Endothelial cell of umbilical vein (primary cell): ENCODE measurements at regions of chr9 and their contacts with region 1.

Region 1: DNA sequence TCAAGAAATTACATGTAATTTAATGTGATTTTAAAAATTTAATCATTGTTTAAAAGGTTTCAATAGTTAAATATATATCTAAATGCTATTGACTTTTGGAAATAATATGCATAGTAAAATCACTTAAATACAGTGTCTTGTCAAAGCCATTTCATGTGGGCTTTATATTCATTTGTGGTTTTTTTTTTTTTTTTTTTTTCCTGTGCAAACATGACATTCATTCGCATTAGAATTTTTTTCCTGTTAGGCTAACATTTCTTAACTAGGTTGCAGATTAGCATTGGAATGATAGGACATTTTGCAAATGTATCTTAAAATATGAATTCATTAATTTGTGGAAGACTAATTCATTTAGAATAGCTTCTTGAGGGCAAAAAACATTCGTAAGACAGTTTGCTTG is 149.8 kb downstream of the PBX3 start:
- DNase-seq: no peak
- H3K4me3 ChIP-seq: no peak overlapping the region
- H3K27ac ChIP-seq: no peak overlapping the region
- H3K4me1 ChIP-seq: peaks cover 1% of the 10 kb centered on the region
- H3K27me3 ChIP-seq: no peaks in the 10 kb centered on the region
- CTCF ChIP-seq: no peak
- POLR2A ChIP-seq: no peak

Region 2: DNA sequence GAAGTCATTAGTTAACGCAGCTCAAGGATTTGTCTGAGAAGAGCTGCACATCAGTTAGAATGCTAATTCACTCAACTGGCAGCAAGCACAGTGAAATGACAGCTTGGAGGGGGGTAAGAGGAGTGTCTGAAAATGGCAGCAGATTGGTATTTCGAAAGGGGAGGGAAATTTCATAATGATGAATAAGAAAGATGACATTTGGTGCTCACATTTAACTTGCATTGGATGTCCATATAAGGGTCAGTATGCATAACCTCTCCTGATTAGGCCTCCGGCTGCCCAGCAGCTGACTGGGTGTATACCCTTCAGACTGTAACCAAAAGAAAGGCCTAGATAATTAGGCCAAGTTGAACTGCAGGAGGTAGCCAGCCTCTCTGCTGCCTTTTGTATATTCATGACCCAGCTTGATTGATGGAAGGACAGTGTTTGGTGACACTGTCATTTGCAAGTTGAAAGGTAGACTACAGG is 18.8 kb before region 1 on chr9:
- CTCF ChIA-PET with region 1: no interaction called
- POLR2A ChIA-PET with region 1: interaction called, 11 read pairs
- dilution Hi-C with region 1: no loop called
- intact Hi-C with region 1: no loop called
- DNase-seq: no peak
- H3K4me3 ChIP-seq: no peak overlapping the region
- H3K27ac ChIP-seq: no peak overlapping the region
- H3K4me1 ChIP-seq: no peaks in the 10 kb centered on the region
- H3K27me3 ChIP-seq: no peaks in the 10 kb centered on the region
- CTCF ChIP-seq: no peak
- POLR2A ChIP-seq: no peak

Region 3: DNA sequence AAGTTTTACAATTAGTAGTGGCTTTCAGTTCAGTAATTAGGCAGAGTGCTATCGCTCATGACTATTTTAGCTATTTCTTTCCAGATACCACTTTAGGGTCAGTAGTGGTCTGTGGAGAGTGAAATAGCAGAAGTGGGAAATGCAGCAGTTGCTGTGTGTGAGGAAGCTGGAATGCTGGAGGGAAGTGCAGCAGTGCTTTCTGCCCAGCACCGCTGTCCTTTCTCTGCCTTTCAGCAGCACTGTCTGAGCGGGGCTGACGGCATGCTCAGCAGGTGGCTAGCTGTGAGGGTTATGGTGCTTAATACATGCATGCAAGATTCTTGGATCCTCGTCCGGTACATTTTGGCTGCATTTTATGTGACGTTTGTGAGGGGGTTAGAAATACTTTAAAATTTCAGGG is 64.1 kb after region 1 on chr9:
- CTCF ChIA-PET with region 1: no interaction called
- POLR2A ChIA-PET with region 1: no interaction called
- dilution Hi-C with region 1: no loop called
- intact Hi-C with region 1: no loop called
- DNase-seq: no peak
- H3K4me3 ChIP-seq: no peak overlapping the region
- H3K27ac ChIP-seq: no peak overlapping the region
- H3K4me1 ChIP-seq: no peaks in the 10 kb centered on the region
- H3K27me3 ChIP-seq: no peaks in the 10 kb centered on the region
- CTCF ChIP-seq: no peak
- POLR2A ChIP-seq: no peak

Region 4: DNA sequence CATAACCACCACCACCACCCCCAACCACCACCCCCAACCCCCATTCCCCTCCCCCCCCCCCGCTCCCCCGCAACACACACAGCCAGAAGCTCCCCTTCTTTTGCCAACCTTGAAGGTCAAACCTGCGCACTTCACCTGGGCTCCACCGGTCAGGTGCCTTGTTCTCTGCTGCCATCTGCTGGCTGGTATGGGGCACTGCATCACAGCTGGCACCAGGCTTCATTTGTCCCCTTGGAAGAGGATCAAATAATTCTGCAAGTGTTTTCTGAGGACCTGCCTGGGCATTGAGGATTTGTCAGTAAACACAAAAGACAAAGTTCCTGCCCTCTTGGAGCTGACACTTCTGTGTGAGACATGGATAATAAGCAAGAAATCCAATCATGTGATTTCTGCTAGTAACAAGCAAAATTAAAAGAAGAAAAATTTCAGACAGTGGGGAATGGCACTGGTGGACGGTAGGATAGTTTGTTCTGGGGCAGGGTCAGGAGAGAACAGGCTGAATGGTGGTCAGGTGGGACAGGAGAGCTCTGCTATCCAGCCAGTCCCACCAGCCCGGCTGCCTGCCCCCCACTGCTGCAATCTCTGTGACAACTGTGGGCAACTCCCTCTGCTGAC is 661.2 kb after region 1 on chr9:
- CTCF ChIA-PET with region 1: no interaction called
- POLR2A ChIA-PET with region 1: no interaction called
- dilution Hi-C with region 1: no loop called
- intact Hi-C with region 1: no loop called
- DNase-seq: peak; percentile 46
- H3K4me3 ChIP-seq: no peak overlapping the region
- H3K27ac ChIP-seq: no peak overlapping the region
- H3K4me1 ChIP-seq: no peaks in the 10 kb centered on the region
- H3K27me3 ChIP-seq: peaks cover 5 to 14% of the 10 kb centered on the region in 2 experiments
- CTCF ChIP-seq: peak; percentile 91 to 95
- POLR2A ChIP-seq: no peak